ENCODE measurements at regions of chr19 and their contacts with region 1.

Region 1: GRCh38 chr19:53906211-53907192 is 2.6 kb upstream of the CACNG7 start:
- DNase-seq: peak; percentile 62
- H3K4me3 Mint-ChIP-seq: peak overlapping the region; percentile 45
- H3K27ac Mint-ChIP-seq: no peak overlapping the region
- H3K4me1 Mint-ChIP-seq: peaks cover 23% of the 10 kb centered on the region
- H3K27me3 Mint-ChIP-seq: peaks cover 48% of the 10 kb centered on the region

Region 2: GRCh38 chr19:53879140-53880081 is 27.1 kb before region 1 on chr19:
- intact Hi-C with region 1: no loop called
- DNase-seq: peak; percentile 84
- H3K4me3 Mint-ChIP-seq: no peak overlapping the region
- H3K27ac Mint-ChIP-seq: no peak overlapping the region
- H3K4me1 Mint-ChIP-seq: peaks cover 43% of the 10 kb centered on the region
- H3K27me3 Mint-ChIP-seq: peaks cover 13% of the 10 kb centered on the region

Region 3: GRCh38 chr19:53892981-53893325 is 13.5 kb before region 1 on chr19:
- intact Hi-C with region 1: loop called (anchors 1 kb)
- DNase-seq: no peak
- H3K4me3 Mint-ChIP-seq: no peak overlapping the region
- H3K27ac Mint-ChIP-seq: no peak overlapping the region
- H3K4me1 Mint-ChIP-seq: peaks cover 5% of the 10 kb centered on the region
- H3K27me3 Mint-ChIP-seq: peaks cover 12% of the 10 kb centered on the region

Region 4: GRCh38 chr19:53927739-53928138 is 21.2 kb after region 1 on chr19:
- intact Hi-C with region 1: no loop called
- DNase-seq: peak; percentile 14
- H3K4me3 Mint-ChIP-seq: no peak overlapping the region
- H3K27ac Mint-ChIP-seq: no peak overlapping the region
- H3K4me1 Mint-ChIP-seq: no peaks in the 10 kb centered on the region
- H3K27me3 Mint-ChIP-seq: no peaks in the 10 kb centered on the region

Region 5: DNA sequence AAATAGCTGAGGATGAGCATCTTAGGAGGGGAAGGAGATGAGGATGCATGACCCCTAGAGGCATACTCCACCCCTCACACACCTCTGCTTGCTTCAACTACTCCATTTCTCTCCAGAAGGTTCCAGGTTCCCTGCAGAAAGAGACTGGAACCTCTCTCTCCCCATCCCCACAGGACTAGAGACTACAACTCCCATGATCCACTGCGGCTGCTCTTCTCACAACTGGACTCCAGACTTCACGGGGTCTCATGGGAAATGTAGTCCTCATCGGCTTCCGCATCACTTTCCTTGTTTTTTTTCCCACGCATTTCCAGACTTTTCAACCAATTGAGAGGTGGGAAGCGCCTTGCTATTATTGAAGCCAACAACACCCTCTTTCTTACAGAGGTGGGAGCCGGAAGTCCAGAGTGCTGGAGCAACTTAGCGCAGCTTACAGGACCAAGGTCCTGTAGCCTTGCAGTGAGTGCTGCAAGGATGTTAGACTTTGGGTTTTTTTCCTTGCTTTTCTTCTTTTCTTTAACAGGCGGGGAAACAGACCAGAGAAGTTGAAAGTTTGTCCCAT is 71.0 kb after region 1 on chr19:
- intact Hi-C with region 1: loop called (anchors 1 kb)
- DNase-seq: peak; percentile 36
- H3K4me3 Mint-ChIP-seq: peak overlapping the region; percentile 12
- H3K27ac Mint-ChIP-seq: no peak overlapping the region
- H3K4me1 Mint-ChIP-seq: peaks cover 7% of the 10 kb centered on the region
- H3K27me3 Mint-ChIP-seq: peaks cover 48% of the 10 kb centered on the region

Region 6: GRCh38 chr19:54023191-54023590 is 116.7 kb after region 1 on chr19:
- intact Hi-C with region 1: loop called (anchors 5 kb)
- DNase-seq: no peak
- H3K4me3 Mint-ChIP-seq: no peak overlapping the region
- H3K27ac Mint-ChIP-seq: no peak overlapping the region
- H3K4me1 Mint-ChIP-seq: no peaks in the 10 kb centered on the region
- H3K27me3 Mint-ChIP-seq: no peaks in the 10 kb centered on the region